ENCODE measurements at regions of chr3 and their contacts with region 1.

Region 1: DNA sequence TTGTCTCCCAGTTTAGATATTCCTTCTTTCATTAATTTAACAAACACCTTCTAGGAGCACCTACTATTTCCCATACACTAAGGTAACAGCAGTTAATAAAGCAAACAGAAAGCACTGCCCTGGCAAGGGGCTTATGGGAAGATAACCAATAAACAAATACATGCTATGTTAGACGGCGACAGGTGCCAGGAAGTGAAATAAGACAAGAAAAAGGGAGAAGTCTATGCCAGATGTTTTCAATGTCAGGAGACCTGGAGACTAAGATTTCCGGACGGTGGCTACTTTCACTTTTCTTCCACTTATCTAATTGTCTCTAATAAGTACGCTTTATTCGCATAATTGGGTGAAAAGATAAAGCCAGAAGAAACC is 32.5 kb upstream of the ZNF445 start:
- DNase-seq: no peak
- ATAC-seq: no peak
- H3K4me3 Mint-ChIP-seq: peak overlapping the region; percentile 77
- H3K27ac Mint-ChIP-seq: peak overlapping the region; percentile 76
- H3K4me1 Mint-ChIP-seq: peaks cover 30% of the 10 kb centered on the region
- H3K27me3 Mint-ChIP-seq: no peaks in the 10 kb centered on the region

Region 2: GRCh38 chr3:44323341-44323955 is 186.5 kb before region 1 on chr3:
- CTCF ChIA-PET with region 1: no interaction called
- POLR2A ChIA-PET with region 1: no interaction called
- intact Hi-C with region 1: loop called (anchors 1 to 5 kb)
- DNase-seq: peak; percentile 75
- ATAC-seq: no peak
- H3K4me3 Mint-ChIP-seq: no peak overlapping the region
- H3K27ac Mint-ChIP-seq: no peak overlapping the region
- H3K4me1 Mint-ChIP-seq: no peaks in the 10 kb centered on the region
- H3K27me3 Mint-ChIP-seq: peaks cover 2% of the 10 kb centered on the region

Region 3: GRCh38 chr3:44439499-44440295 is 70.3 kb before region 1 on chr3:
- CTCF ChIA-PET with region 1: interaction called, 4 read pairs
- POLR2A ChIA-PET with region 1: interaction called, 3 read pairs
- intact Hi-C with region 1: loop called in 1 of 2 experiments (anchors 1 kb)
- DNase-seq: peak; percentile 86
- ATAC-seq: peak; percentile 88
- H3K4me3 Mint-ChIP-seq: peak overlapping the region; percentile 58
- H3K27ac Mint-ChIP-seq: peak overlapping the region; percentile 97
- H3K4me1 Mint-ChIP-seq: peaks cover 43% of the 10 kb centered on the region
- H3K27me3 Mint-ChIP-seq: no peaks in the 10 kb centered on the region

Region 4: GRCh38 chr3:44468572-44469520 is 41.1 kb before region 1 on chr3:
- CTCF ChIA-PET with region 1: no interaction called
- POLR2A ChIA-PET with region 1: interaction called, 3 read pairs
- intact Hi-C with region 1: loop called in 1 of 2 experiments (anchors 2 kb)
- DNase-seq: peak; percentile 72
- ATAC-seq: peak; percentile 85
- H3K4me3 Mint-ChIP-seq: no peak overlapping the region
- H3K27ac Mint-ChIP-seq: peak overlapping the region; percentile 52
- H3K4me1 Mint-ChIP-seq: peaks cover 42% of the 10 kb centered on the region
- H3K27me3 Mint-ChIP-seq: no peaks in the 10 kb centered on the region

Region 5: DNA sequence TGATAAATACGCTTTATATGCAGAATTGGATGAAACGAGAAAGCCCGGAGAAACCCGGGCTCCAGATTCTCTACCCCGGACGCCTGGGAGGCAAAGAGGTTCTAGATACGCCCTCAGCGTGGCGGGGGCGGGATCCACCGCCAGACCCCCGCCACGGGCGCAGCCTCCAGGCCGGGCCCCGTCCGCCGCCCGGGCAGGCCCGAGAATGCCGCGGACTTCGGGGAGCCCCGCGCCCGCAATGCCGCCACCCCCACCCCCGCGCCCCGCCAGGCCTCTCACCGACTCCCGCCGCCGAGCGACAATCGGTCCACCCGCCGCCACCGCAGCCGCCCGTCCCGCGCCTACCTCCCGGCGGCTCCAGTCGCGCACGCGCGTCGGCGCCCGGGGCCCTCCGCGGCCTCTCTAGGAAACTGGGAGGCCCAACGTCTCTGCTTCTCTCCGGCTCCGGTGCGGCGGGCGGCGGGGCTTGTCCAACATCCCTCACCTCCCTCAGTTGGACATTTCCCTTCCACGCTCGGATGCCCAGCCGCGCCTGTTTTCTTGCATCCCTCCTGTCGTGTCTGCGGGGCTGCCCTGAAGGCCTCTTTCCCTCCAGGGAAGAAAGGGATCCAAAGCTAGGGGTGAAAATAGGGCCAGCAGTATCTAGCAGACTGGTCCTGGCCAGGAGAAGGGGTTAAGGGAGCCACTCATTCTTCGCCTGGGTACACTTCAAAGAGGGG is 32.5 kb before region 1 on chr3 and contains the start of gene ZNF445:
- CTCF ChIA-PET with region 1: interaction called, 3 read pairs
- POLR2A ChIA-PET with region 1: interaction called, 6 read pairs
- intact Hi-C with region 1: loop called (anchors 1 kb)
- DNase-seq: peak; percentile 87
- ATAC-seq: peak; percentile 89
- H3K4me3 Mint-ChIP-seq: peak within 1 kb of the TSS; percentile 75
- H3K27ac Mint-ChIP-seq: peak within 1 kb of the TSS; percentile 88
- H3K4me1 Mint-ChIP-seq: peaks cover 33% of the 10 kb centered on the region
- H3K27me3 Mint-ChIP-seq: no peaks in the 10 kb centered on the region
- total RNA-seq, gene ZNF445: 13.2 to 16.3 TPM

Region 6: GRCh38 chr3:44761424-44762169 is 251.6 kb after region 1 on chr3 and contains the starts of genes KIAA1143 and KIF15:
- CTCF ChIA-PET with region 1: no interaction called
- POLR2A ChIA-PET with region 1: interaction called, 3 read pairs
- intact Hi-C with region 1: loop called in 1 of 2 experiments (anchors 1 kb)
- DNase-seq: peak; percentile 99
- ATAC-seq: peak; percentile 94
- H3K4me3 Mint-ChIP-seq: peak within 1 kb of the TSS; percentile 88
- H3K27ac Mint-ChIP-seq: peak within 1 kb of the TSS; percentile 89
- H3K4me1 Mint-ChIP-seq: peaks cover 24% of the 10 kb centered on the region
- H3K27me3 Mint-ChIP-seq: no peaks in the 10 kb centered on the region
- total RNA-seq, gene KIAA1143: 40.2 to 74.1 TPM
- total RNA-seq, gene KIF15: 40.1 to 51.7 TPM

Region 7: DNA sequence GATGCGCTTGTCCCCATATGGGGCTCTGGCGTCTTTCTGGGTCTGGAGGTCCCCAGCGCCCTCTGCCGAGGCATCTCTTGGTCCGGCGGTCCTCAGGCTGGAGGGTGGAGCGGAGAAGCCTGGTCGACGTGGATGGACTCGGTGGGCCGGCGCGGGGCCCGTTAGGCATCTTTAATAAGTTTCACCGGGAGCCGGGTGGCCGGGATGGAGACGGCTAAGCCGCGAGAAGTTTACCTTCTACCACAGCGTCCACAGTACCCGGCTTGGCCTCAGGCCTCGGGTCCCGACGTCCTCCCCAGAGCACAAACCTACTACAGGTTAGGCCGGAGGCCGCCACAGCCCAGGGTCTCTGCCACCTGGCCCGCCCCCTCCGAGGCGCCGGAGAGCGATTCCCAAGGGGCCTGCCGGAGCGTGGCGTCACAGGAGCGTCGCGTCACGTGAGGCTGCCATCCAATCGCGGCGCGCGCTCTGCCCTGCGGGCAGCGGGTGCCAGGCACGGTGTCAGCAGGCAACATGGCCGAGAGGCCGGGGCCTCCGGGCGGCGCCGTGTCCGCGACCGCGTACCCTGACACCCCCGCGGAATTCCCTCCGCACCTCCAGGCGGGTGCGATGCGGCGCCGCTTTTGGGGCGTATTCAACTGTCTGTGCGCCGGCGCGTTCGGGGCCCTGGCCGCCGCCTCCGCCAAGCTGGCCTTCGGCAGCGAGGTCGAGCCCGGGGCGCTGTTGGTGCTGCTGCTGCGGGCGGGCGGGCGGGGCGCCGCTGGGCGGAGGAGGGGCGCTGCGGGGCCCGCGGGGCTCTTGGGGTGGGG is 351.6 kb after region 1 on chr3 and contains the start of gene TMEM42:
- CTCF ChIA-PET with region 1: no interaction called
- POLR2A ChIA-PET with region 1: no interaction called
- intact Hi-C with region 1: loop called in 1 of 2 experiments (anchors 1 kb)
- DNase-seq: peak; percentile 91
- ATAC-seq: peak; percentile 96
- H3K4me3 Mint-ChIP-seq: peak within 1 kb of the TSS; percentile 78
- H3K27ac Mint-ChIP-seq: peak within 1 kb of the TSS; percentile 73
- H3K4me1 Mint-ChIP-seq: peaks cover 34% of the 10 kb centered on the region
- H3K27me3 Mint-ChIP-seq: no peaks in the 10 kb centered on the region
- total RNA-seq, gene TMEM42: 7.6 to 10.9 TPM

Region 8: GRCh38 chr3:45896956-45897355 is 1387.0 kb after region 1 on chr3:
- CTCF ChIA-PET with region 1: no interaction called
- POLR2A ChIA-PET with region 1: no interaction called
- intact Hi-C with region 1: no loop called
- DNase-seq: no peak
- ATAC-seq: no peak
- H3K4me3 Mint-ChIP-seq: no peak overlapping the region
- H3K27ac Mint-ChIP-seq: no peak overlapping the region
- H3K4me1 Mint-ChIP-seq: peaks cover 16% of the 10 kb centered on the region
- H3K27me3 Mint-ChIP-seq: peaks cover 20% of the 10 kb centered on the region

Measured in activated CD4-positive, alpha-beta T cell treated with anti-CD3 and anti-CD28 coated beads for 36 hours (primary cell).